ENCODE measurements at regions of chr3 and their contacts with region 1.

Region 1: GRCh38 chr3:174397848-174398247 is 461.3 kb upstream of the NAALADL2 start:
- DNase-seq: peak; percentile 44
- H3K4me3 ChIP-seq: no peak overlapping the region
- H3K27ac ChIP-seq: no peak overlapping the region
- H3K4me1 ChIP-seq: no peaks in the 10 kb centered on the region
- H3K27me3 ChIP-seq: no peaks in the 10 kb centered on the region
- CTCF ChIP-seq: no peak
- POLR2A ChIP-seq: no peak

Region 2: DNA sequence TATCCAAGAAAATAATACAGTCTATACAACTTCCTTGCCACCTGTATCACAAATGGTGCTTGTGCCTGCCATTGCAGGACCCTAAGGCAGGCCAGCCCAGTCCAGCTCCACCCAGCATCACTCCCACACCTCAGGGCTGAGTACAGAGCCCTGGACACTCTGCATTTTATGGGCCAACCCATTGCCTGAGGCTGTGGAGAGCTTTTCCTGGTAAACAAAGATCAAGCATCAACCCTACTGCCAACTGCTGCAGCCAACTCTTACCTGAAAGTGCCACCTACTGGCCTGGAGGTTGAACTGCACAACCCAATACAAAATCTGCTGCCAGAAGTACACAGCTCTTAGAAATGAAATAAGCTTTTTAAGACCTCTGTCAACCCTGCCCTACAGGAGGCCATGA is 1543.5 kb after region 1 on chr3:
- CTCF ChIA-PET with region 1: no interaction called
- POLR2A ChIA-PET with region 1: no interaction called
- dilution Hi-C with region 1: no loop called
- intact Hi-C with region 1: loop called (anchors 5 kb)
- DNase-seq: peak; percentile 11
- H3K4me3 ChIP-seq: no peak overlapping the region
- H3K27ac ChIP-seq: no peak overlapping the region
- H3K4me1 ChIP-seq: no peaks in the 10 kb centered on the region
- H3K27me3 ChIP-seq: no peaks in the 10 kb centered on the region
- CTCF ChIP-seq: peak; percentile 29 to 33
- POLR2A ChIP-seq: no peak

Region 3: DNA sequence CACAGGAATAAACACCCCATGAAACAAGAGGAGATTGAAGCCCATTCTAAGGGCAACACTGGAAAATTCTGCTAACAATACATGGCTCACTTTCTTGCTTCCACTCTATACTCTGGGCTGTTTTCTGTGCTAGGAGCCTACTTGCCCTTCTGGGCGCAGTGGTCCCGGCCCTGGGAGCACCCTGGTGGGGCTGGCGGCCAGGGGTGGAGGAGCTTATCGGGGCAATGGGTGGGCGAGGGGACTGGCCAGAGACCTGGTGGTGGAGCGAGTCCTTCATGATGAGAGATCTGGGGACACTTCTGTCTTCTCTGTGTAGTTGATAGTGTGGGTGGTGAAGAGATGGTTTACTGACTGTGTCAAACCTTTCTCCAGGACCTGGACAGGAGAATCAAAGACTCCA is 1670.9 kb after region 1 on chr3:
- CTCF ChIA-PET with region 1: no interaction called
- POLR2A ChIA-PET with region 1: no interaction called
- dilution Hi-C with region 1: no loop called
- intact Hi-C with region 1: loop called (anchors 10 kb)
- DNase-seq: no peak
- H3K4me3 ChIP-seq: no peak overlapping the region
- H3K27ac ChIP-seq: no peak overlapping the region
- H3K4me1 ChIP-seq: no peaks in the 10 kb centered on the region
- H3K27me3 ChIP-seq: no peaks in the 10 kb centered on the region
- CTCF ChIP-seq: no peak
- POLR2A ChIP-seq: no peak